SK-N-SH (cell line): ENCODE measurements at regions of chr3 and their contacts with region 1.

Region 1: DNA sequence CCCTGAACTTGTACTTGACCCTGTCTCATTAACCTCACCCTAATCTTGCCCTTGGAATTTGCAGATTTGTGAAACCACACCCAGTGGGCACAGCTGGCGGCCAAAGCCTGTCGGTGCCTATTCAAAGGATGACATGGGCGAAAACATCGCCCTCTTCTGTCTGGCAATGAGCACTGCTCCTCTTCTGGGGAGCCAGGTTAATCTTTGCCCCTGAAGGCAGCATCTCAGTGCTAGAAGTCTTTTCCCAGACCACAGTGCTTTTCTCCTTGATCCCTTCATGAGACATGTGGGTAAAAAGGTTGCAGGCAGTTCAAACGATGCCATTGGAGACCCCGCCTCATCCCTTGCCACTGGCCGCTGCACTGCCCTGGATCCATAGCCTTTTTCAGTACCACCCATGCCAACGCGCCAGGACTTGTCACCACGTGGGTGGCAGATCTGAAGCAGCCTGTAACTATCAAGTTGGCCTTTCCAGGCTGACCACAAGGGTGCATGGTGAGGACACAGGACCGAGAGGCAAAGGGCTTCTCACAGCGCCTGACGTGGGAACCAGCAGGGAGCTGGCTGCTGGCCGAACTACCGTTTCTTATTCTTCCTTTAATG is 6.5 kb upstream of the DNASE1L3 start:
- DNase-seq: peak; percentile 72
- H3K4me3 ChIP-seq: peak overlapping the region; percentile 6 to 34; a peak in 2 of 4 replicates
- H3K27ac ChIP-seq: no peak overlapping the region; a peak in 1 of 4 replicates
- H3K4me1 ChIP-seq: peaks cover 0 to 5% of the 10 kb centered on the region in 2 experiments; a peak in 1 of 4 replicates
- H3K27me3 ChIP-seq: peaks cover 12% of the 10 kb centered on the region; the same call in 1 of the 2 replicates
- CTCF ChIP-seq: peak; percentile 82
- EP300 ChIP-seq: no peak
- RAD21 ChIP-seq: peak; percentile 68

Region 2: GRCh38 chr3:58013973-58014649 is 203.2 kb before region 1 on chr3:
- CTCF ChIA-PET with region 1: interaction called, 11 read pairs
- POLR2A ChIA-PET with region 1: no interaction called
- DNase-seq: peak; percentile 89
- H3K4me3 ChIP-seq: peak overlapping the region; percentile 6 to 47; a peak in 3 of 4 replicates
- H3K27ac ChIP-seq: peak overlapping the region; percentile 85 to 93
- H3K4me1 ChIP-seq: peaks cover 28 to 52% of the 10 kb centered on the region in 2 experiments
- H3K27me3 ChIP-seq: no peaks in the 10 kb centered on the region
- CTCF ChIP-seq: no peak
- EP300 ChIP-seq: peak; percentile 80 to 87
- RAD21 ChIP-seq: peak; percentile 18

Region 3: DNA sequence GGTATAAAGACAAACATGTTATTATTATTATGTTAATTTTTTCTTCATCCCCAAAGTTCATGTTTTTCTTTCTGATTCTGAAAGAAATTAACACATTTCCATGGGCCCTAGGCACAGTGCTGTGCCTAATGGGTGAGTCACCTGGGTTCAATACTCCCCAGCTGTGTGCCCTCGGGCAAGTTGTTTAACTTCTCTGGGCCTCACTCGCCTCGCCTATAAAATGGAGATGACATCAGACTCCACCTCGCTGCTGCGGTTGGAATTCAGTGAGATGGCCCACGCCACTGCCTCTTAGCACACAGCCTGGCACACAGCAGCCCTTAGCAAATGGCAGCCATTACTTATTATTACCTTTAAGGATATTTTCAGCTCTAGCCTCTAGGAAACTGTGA is 29.1 kb before region 1 on chr3:
- CTCF ChIA-PET with region 1: interaction called, 44 read pairs
- POLR2A ChIA-PET with region 1: no interaction called
- DNase-seq: no peak
- H3K4me3 ChIP-seq: no peak overlapping the region
- H3K27ac ChIP-seq: no peak overlapping the region
- H3K4me1 ChIP-seq: no peaks in the 10 kb centered on the region
- H3K27me3 ChIP-seq: no peaks in the 10 kb centered on the region
- CTCF ChIP-seq: no peak
- EP300 ChIP-seq: no peak
- RAD21 ChIP-seq: no peak

Region 4: GRCh38 chr3:58206406-58207011 is 10.8 kb before region 1 on chr3:
- CTCF ChIA-PET with region 1: interaction called, 19 read pairs
- POLR2A ChIA-PET with region 1: no interaction called
- DNase-seq: no peak
- H3K4me3 ChIP-seq: no peak overlapping the region
- H3K27ac ChIP-seq: no peak overlapping the region
- H3K4me1 ChIP-seq: no peaks in the 10 kb centered on the region
- H3K27me3 ChIP-seq: peaks cover under 1% of the 10 kb centered on the region; the same call in 1 of the 2 replicates
- CTCF ChIP-seq: no peak
- EP300 ChIP-seq: no peak
- RAD21 ChIP-seq: no peak

Region 5: GRCh38 chr3:58260261-58260731 is 43.0 kb after region 1 on chr3:
- CTCF ChIA-PET with region 1: interaction called, 10 read pairs
- POLR2A ChIA-PET with region 1: no interaction called
- DNase-seq: no peak
- H3K4me3 ChIP-seq: no peak overlapping the region
- H3K27ac ChIP-seq: peak overlapping the region in 1 of 2 experiments; percentile 53; a peak in 2 of 4 replicates
- H3K4me1 ChIP-seq: peaks cover 0 to 13% of the 10 kb centered on the region in 2 experiments; a peak in 2 of 4 replicates
- H3K27me3 ChIP-seq: no peaks in the 10 kb centered on the region
- CTCF ChIP-seq: no peak
- EP300 ChIP-seq: no peak
- RAD21 ChIP-seq: no peak